IMR-90 (cell line): ENCODE measurements at regions of chr6 and their contacts with region 1.

Region 1: DNA sequence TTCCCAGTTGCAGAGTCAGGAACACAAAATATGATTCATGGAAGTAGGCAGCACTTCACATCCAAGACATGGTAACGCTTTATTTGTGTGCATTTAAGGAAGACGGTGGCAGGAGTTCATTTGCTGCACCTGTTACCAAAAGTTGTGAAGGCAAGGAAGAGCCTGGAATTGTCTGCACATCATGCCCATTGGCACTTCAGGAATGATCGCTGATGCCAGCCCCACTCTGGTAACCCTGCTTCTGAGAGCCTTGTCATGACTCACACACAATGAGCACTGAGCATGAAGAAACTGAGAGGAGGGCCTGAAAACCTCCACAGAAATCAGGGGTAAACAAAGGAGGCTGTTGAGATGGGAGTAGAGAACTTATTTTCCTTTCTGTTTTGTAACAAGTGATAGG is 181.1 kb downstream of the RPS12 start:
- DNase-seq: peak; percentile 40
- ATAC-seq: peak; percentile 51
- H3K4me3 ChIP-seq: no peak overlapping the region
- H3K27ac ChIP-seq: no peak overlapping the region
- H3K4me1 ChIP-seq: peaks cover 2% of the 10 kb centered on the region; the same call in 1 of the 2 replicates
- H3K27me3 ChIP-seq: no peaks in the 10 kb centered on the region
- CTCF ChIP-seq: no peak
- POLR2A ChIP-seq: no peak
- RAD21 ChIP-seq: no peak

Region 2: GRCh38 chr6:132020138-132020581 is 975.3 kb before region 1 on chr6:
- CTCF ChIA-PET with region 1: no interaction called
- POLR2A ChIA-PET with region 1: no interaction called
- dilution Hi-C with region 1: no loop called
- in situ Hi-C with region 1: no loop called
- intact Hi-C with region 1: no loop called
- DNase-seq: peak; percentile 13
- ATAC-seq: 0 out of 2 replicates have a peak, but pooled peaks have one; percentile 24
- H3K4me3 ChIP-seq: no peak overlapping the region
- H3K27ac ChIP-seq: peak overlapping the region; percentile 26; the same call in 1 of the 2 replicates
- H3K4me1 ChIP-seq: peaks cover 4% of the 10 kb centered on the region; the same call in 1 of the 2 replicates
- H3K27me3 ChIP-seq: no peaks in the 10 kb centered on the region
- CTCF ChIP-seq: no peak
- POLR2A ChIP-seq: no peak
- RAD21 ChIP-seq: no peak

Region 3: GRCh38 chr6:133128191-133128590 is 132.8 kb after region 1 on chr6:
- CTCF ChIA-PET with region 1: interaction called, 11 read pairs
- POLR2A ChIA-PET with region 1: no interaction called
- dilution Hi-C with region 1: no loop called
- in situ Hi-C with region 1: no loop called
- intact Hi-C with region 1: no loop called
- DNase-seq: peak; percentile 28
- ATAC-seq: no peak
- H3K4me3 ChIP-seq: no peak overlapping the region
- H3K27ac ChIP-seq: no peak overlapping the region
- H3K4me1 ChIP-seq: peaks cover 20% of the 10 kb centered on the region
- H3K27me3 ChIP-seq: no peaks in the 10 kb centered on the region
- CTCF ChIP-seq: no peak
- POLR2A ChIP-seq: no peak
- RAD21 ChIP-seq: no peak